ENCODE measurements at regions of chr1 and their contacts with region 1.

Region 1: GRCh38 chr1:224851210-224851847 is 78.1 kb upstream of the DNAH14 start:
- H3K4me3 Mint-ChIP-seq: no peak overlapping the region
- H3K27ac Mint-ChIP-seq: peak overlapping the region; percentile 3
- H3K4me1 Mint-ChIP-seq: no peaks in the 10 kb centered on the region
- H3K27me3 Mint-ChIP-seq: peaks cover 1% of the 10 kb centered on the region

Region 2: GRCh38 chr1:224644553-224645154 is 206.7 kb before region 1 on chr1:
- intact Hi-C with region 1: loop called (anchors 1 kb)
- H3K4me3 Mint-ChIP-seq: no peak overlapping the region
- H3K27ac Mint-ChIP-seq: no peak overlapping the region
- H3K4me1 Mint-ChIP-seq: peaks cover 4% of the 10 kb centered on the region
- H3K27me3 Mint-ChIP-seq: peaks cover 12% of the 10 kb centered on the region

Region 3: GRCh38 chr1:224700915-224701531 is 150.3 kb before region 1 on chr1:
- intact Hi-C with region 1: loop called (anchors 5 kb)
- H3K4me3 Mint-ChIP-seq: no peak overlapping the region
- H3K27ac Mint-ChIP-seq: no peak overlapping the region
- H3K4me1 Mint-ChIP-seq: no peaks in the 10 kb centered on the region
- H3K27me3 Mint-ChIP-seq: peaks cover 8% of the 10 kb centered on the region

Region 4: GRCh38 chr1:224774378-224774777 is 77.0 kb before region 1 on chr1:
- intact Hi-C with region 1: no loop called
- H3K4me3 Mint-ChIP-seq: no peak overlapping the region
- H3K27ac Mint-ChIP-seq: no peak overlapping the region
- H3K4me1 Mint-ChIP-seq: no peaks in the 10 kb centered on the region
- H3K27me3 Mint-ChIP-seq: peaks cover 6% of the 10 kb centered on the region

Measured in dendritic cell treated with granulocyte-macrophage colony-stimulating factor and Interleukin-4, amounts not matched to agents 40 ng/mL and 50 ng/mL, for 4 days (primary cell).